Endothelial cell of umbilical vein (primary cell): ENCODE measurements at regions of chr15 and their contacts with region 1.

Region 1: GRCh38 chr15:66619151-66619903 is 53.5 kb upstream of the LCTL start:
- DNase-seq: peak; percentile 72
- H3K4me3 ChIP-seq: no peak overlapping the region
- H3K27ac ChIP-seq: peak overlapping the region; percentile 88
- H3K4me1 ChIP-seq: peaks cover 52% of the 10 kb centered on the region
- H3K27me3 ChIP-seq: no peaks in the 10 kb centered on the region
- CTCF ChIP-seq: peak; percentile 91 to 95
- POLR2A ChIP-seq: no peak

Region 2: GRCh38 chr15:66025015-66025452 is 594.3 kb before region 1 on chr15:
- CTCF ChIA-PET with region 1: no interaction called
- POLR2A ChIA-PET with region 1: no interaction called
- dilution Hi-C with region 1: no loop called
- intact Hi-C with region 1: no loop called
- DNase-seq: no peak
- H3K4me3 ChIP-seq: no peak overlapping the region
- H3K27ac ChIP-seq: no peak overlapping the region
- H3K4me1 ChIP-seq: no peaks in the 10 kb centered on the region
- H3K27me3 ChIP-seq: peaks cover 15% of the 10 kb centered on the region in 2 experiments
- CTCF ChIP-seq: no peak
- POLR2A ChIP-seq: no peak

Region 3: GRCh38 chr15:66251790-66252684 is 367.3 kb before region 1 on chr15:
- CTCF ChIA-PET with region 1: no interaction called
- POLR2A ChIA-PET with region 1: no interaction called
- dilution Hi-C with region 1: no loop called
- intact Hi-C with region 1: no loop called
- DNase-seq: peak; percentile 40
- H3K4me3 ChIP-seq: peak overlapping the region; percentile 15 to 42 (median 35)
- H3K27ac ChIP-seq: no peak overlapping the region
- H3K4me1 ChIP-seq: peaks cover 18% of the 10 kb centered on the region
- H3K27me3 ChIP-seq: peaks cover 68 to 76% of the 10 kb centered on the region in 2 experiments
- CTCF ChIP-seq: peak; percentile 67 to 87
- POLR2A ChIP-seq: no peak

Region 4: DNA sequence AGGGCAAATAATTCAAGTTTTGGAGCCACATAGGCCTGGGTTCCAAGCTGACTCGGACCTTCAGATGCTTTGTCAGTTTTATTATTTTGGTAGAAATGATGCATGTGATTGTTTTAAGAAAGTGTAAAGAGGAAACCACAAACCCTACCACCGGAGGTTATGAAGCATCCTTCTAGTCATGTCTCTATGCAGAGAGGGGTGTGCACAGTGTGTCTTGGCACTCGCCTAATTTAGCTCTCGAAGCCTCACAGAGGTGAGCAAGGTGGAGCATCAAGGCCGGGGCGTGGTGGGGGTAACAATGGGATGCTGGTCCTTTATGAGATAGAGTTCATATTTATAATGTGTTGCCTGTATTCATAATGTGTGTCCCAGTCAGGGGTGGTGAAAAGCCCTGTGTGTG is 19.1 kb after region 1 on chr15:
- CTCF ChIA-PET with region 1: interaction called, 25 read pairs
- POLR2A ChIA-PET with region 1: no interaction called
- dilution Hi-C with region 1: no loop called
- intact Hi-C with region 1: no loop called
- DNase-seq: no peak
- H3K4me3 ChIP-seq: no peak overlapping the region
- H3K27ac ChIP-seq: no peak overlapping the region
- H3K4me1 ChIP-seq: peaks cover 26% of the 10 kb centered on the region
- H3K27me3 ChIP-seq: no peaks in the 10 kb centered on the region
- CTCF ChIP-seq: no peak
- POLR2A ChIP-seq: no peak

Region 5: DNA sequence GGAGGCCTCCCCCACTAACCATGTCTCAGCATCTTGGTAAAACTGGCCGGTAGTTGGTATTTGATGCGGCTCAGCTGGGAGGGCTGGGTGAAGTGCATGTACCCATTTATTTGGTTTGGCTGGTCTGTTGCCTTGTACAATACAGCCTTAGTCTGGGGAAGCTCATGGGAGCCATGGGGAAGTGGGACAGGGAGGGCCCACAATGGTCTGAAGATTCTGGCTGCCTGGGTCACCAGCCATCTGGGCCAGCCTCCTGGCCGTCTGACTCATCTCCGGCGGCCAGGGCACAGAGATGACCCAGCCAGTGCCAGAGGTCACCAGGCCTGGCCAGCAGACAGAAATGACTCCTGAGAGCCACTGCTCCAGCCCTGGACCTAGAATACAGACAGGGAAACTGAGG is 31.1 kb after region 1 on chr15:
- CTCF ChIA-PET with region 1: interaction called, 35 read pairs
- POLR2A ChIA-PET with region 1: no interaction called
- dilution Hi-C with region 1: no loop called
- intact Hi-C with region 1: no loop called
- DNase-seq: peak; percentile 87
- H3K4me3 ChIP-seq: no peak overlapping the region
- H3K27ac ChIP-seq: peak overlapping the region; percentile 71
- H3K4me1 ChIP-seq: peaks cover 34% of the 10 kb centered on the region
- H3K27me3 ChIP-seq: no peaks in the 10 kb centered on the region
- CTCF ChIP-seq: no peak
- POLR2A ChIP-seq: no peak

Region 6: DNA sequence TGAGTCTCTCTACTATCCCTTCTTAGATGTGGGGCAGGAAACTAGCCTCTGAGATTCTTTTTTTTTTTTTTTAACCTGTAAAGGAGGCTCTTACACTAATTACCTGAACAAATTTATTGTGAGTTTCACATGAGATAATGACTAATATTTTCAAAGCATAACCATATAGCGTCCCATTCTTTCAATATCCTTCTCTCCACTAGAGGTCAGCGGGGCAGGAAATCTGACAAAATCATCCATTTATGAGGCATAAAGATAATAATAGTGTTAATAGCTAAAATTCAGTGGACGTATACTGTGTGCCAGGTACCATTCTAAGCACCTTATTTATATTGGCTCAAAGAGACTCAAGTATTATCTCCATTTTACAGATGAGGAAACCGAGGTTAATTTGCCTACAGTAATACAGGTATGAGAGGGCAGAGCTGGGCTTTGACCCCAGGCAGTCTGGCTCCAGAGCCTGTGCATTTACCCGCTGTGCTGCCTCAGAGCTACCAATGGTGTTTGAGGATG is 66.4 kb after region 1 on chr15:
- CTCF ChIA-PET with region 1: interaction called, 24 read pairs
- POLR2A ChIA-PET with region 1: no interaction called
- dilution Hi-C with region 1: no loop called
- intact Hi-C with region 1: no loop called
- DNase-seq: peak; percentile 44
- H3K4me3 ChIP-seq: no peak overlapping the region
- H3K27ac ChIP-seq: no peak overlapping the region
- H3K4me1 ChIP-seq: peaks cover 7% of the 10 kb centered on the region
- H3K27me3 ChIP-seq: no peaks in the 10 kb centered on the region
- CTCF ChIP-seq: no peak
- POLR2A ChIP-seq: no peak

Region 7: DNA sequence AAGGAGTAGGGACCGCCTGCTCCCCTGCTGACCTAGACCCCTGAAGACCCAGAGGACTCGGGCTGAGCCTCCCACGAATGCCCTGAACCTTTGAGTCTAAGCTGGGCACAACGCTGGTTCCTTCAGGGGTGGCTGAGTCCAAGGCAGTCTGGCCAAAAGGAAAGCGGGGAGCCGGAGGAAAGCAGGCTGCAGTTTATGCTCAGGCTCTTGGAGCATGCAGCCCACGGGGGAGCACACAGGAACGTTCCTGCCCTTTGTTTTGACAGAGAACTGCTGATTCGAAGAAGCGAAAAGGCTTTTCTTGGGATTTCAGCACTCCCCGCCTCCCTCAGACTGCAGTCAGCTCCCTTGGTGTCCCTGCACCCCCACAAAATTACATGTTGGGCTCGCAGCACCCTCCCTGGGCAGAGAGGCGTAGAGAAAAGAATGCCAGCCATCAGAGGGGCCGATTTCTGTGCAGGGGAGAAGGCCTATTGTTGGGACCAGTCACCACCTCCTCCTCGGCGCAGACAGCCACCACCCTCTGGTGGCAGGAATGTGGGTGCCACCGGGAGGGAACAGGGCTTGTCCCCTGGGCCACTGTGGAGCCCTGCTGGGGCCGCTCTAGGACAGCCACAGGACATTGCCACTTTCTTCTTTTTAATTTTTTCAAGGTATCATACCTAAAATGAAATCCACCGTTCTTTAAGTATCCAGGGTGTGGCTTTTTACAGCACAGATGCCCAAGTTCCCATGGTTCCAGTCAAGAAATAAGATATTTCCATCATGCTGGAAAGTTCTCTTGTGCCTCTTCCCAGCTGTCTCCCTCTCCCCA is 154.9 kb after region 1 on chr15:
- CTCF ChIA-PET with region 1: interaction called, 25 read pairs
- POLR2A ChIA-PET with region 1: no interaction called
- dilution Hi-C with region 1: no loop called
- intact Hi-C with region 1: loop called (anchors 1 kb)
- DNase-seq: peak; percentile 80
- H3K4me3 ChIP-seq: no peak overlapping the region
- H3K27ac ChIP-seq: peak overlapping the region; percentile 25
- H3K4me1 ChIP-seq: peaks cover 21% of the 10 kb centered on the region
- H3K27me3 ChIP-seq: no peaks in the 10 kb centered on the region
- CTCF ChIP-seq: peak; percentile 92 to 96
- POLR2A ChIP-seq: no peak

Region 8: DNA sequence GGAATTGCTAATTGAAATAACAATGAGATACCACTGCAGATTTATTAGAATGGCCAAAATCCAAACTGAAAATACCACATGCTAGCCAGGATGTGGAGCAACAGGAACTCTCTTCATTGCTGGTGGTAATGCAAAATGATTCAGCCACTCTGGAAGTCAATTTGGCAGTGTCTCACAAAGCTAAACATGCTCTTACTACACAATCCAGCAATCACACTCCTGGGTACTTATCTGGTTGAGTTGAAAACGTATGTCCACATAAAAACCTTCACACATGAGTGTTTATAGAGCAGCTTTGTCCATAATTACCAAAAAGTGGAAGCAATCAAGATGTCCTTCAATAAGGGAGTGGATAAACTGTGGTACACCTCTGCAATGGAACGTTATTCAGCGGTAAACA is 196.0 kb after region 1 on chr15:
- CTCF ChIA-PET with region 1: no interaction called
- POLR2A ChIA-PET with region 1: no interaction called
- dilution Hi-C with region 1: no loop called
- intact Hi-C with region 1: no loop called
- DNase-seq: peak; percentile 53
- H3K4me3 ChIP-seq: no peak overlapping the region
- H3K27ac ChIP-seq: no peak overlapping the region
- H3K4me1 ChIP-seq: peaks cover 7% of the 10 kb centered on the region
- H3K27me3 ChIP-seq: no peaks in the 10 kb centered on the region
- CTCF ChIP-seq: no peak
- POLR2A ChIP-seq: no peak

Region 9: GRCh38 chr15:66841953-66842681 is 222.8 kb after region 1 on chr15:
- CTCF ChIA-PET with region 1: interaction called, 3 read pairs
- POLR2A ChIA-PET with region 1: no interaction called
- dilution Hi-C with region 1: no loop called
- intact Hi-C with region 1: loop called (anchors 1 kb)
- DNase-seq: peak; percentile 93
- H3K4me3 ChIP-seq: peak overlapping the region in 2 of 3 experiments; percentile 45 to 50
- H3K27ac ChIP-seq: peak overlapping the region; percentile 89
- H3K4me1 ChIP-seq: peaks cover 15% of the 10 kb centered on the region
- H3K27me3 ChIP-seq: no peaks in the 10 kb centered on the region
- CTCF ChIP-seq: no peak
- POLR2A ChIP-seq: no peak